WTC11 (cell line): ENCODE measurements at regions of chr9 and their contacts with region 1.

Region 1: DNA sequence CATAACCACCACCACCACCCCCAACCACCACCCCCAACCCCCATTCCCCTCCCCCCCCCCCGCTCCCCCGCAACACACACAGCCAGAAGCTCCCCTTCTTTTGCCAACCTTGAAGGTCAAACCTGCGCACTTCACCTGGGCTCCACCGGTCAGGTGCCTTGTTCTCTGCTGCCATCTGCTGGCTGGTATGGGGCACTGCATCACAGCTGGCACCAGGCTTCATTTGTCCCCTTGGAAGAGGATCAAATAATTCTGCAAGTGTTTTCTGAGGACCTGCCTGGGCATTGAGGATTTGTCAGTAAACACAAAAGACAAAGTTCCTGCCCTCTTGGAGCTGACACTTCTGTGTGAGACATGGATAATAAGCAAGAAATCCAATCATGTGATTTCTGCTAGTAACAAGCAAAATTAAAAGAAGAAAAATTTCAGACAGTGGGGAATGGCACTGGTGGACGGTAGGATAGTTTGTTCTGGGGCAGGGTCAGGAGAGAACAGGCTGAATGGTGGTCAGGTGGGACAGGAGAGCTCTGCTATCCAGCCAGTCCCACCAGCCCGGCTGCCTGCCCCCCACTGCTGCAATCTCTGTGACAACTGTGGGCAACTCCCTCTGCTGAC is 55.6 kb upstream of the LMX1B start:
- DNase-seq: peak; percentile 85
- ATAC-seq: peak; percentile 86
- H3K4me3 Mint-ChIP-seq: no peak overlapping the region
- H3K27ac Mint-ChIP-seq: no peak overlapping the region
- H3K4me1 Mint-ChIP-seq: peaks cover 7% of the 10 kb centered on the region
- H3K27me3 Mint-ChIP-seq: peaks cover 3% of the 10 kb centered on the region; the same call in 1 of the 2 replicates
- CTCF ChIP-seq: peak; percentile 98

Region 2: GRCh38 chr9:126482361-126483044 is 75.7 kb before region 1 on chr9:
- CTCF ChIA-PET with region 1: interaction called, 27 read pairs
- POLR2A ChIA-PET with region 1: no interaction called
- DNase-seq: peak; percentile 64
- ATAC-seq: peak; percentile 79
- H3K4me3 Mint-ChIP-seq: peak overlapping the region; percentile 60
- H3K27ac Mint-ChIP-seq: no peak overlapping the region
- H3K4me1 Mint-ChIP-seq: no peaks in the 10 kb centered on the region; the same call in 1 of the 2 replicates
- H3K27me3 Mint-ChIP-seq: no peaks in the 10 kb centered on the region; the same call in 1 of the 2 replicates
- CTCF ChIP-seq: no peak

Region 3: DNA sequence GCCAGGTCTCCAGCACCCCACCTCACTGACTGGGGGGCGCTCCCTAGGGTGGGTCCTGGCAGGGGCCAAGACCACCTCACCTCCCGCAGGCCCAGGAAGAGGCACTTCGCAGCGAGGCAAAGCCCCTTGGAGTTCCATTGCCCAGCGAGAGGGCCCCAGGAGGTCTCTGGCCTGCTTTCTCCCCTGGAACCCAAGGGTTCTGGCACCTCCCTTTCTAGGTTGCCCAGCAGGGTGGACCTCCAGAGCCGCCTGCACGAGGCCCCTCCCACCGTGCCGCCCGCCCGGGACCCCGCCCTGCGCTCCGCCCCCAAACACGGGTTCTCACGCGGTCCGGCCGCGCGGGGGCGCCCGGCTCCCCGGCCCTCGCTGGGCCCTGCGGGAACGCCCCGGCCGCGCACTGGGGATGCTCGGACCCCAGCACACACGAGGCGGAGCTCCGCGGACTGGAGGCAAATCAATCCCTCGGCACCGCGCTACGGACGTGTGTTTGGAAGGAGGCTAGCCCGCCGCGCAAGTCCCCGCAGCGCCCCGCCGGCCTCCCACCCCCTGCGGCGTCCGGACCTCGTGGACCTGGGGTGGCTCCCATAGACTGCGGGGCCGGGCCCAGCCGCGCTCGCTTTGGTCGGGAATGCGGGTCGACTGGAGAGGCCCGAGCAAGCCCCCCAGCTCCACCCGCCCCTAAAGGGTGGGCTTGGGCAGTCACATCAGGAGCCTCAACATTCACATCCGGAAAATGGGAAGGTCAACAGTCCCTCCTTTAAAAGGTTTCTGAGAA is 43.9 kb before region 1 on chr9:
- CTCF ChIA-PET with region 1: interaction called, 296 read pairs
- POLR2A ChIA-PET with region 1: interaction called, 4 read pairs
- DNase-seq: peak; percentile 86
- ATAC-seq: peak; percentile 85
- H3K4me3 Mint-ChIP-seq: peak overlapping the region; percentile 48
- H3K27ac Mint-ChIP-seq: no peak overlapping the region
- H3K4me1 Mint-ChIP-seq: peaks cover 34% of the 10 kb centered on the region
- H3K27me3 Mint-ChIP-seq: peaks cover 20% of the 10 kb centered on the region
- CTCF ChIP-seq: peak; percentile 56

Region 4: DNA sequence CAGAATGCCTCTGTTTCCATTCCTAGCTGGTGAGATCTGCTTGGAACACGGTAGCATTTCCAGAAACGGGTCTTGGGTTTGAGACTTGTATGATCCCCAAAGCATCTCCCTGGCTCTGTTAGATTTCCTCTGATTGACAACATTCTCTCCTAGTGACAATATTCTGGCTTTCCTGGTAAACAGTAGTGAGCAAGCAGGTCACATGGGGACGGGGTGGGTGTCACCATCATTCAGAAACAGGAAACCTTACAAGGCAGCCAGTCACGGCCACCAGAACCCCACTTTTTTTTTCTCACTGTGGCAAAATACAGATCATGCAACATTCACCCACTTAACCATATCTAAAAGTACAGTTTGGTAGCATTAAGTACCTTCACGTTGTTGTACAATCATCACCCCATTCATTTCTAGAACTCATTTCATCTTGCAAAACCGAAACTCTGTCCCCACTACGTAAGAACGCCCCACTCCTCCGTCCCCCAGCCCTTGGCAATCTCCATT is 34.5 kb before region 1 on chr9:
- CTCF ChIA-PET with region 1: interaction called, 296 read pairs
- POLR2A ChIA-PET with region 1: interaction called, 9 read pairs
- DNase-seq: no peak
- ATAC-seq: no peak
- H3K4me3 Mint-ChIP-seq: no peak overlapping the region
- H3K27ac Mint-ChIP-seq: no peak overlapping the region
- H3K4me1 Mint-ChIP-seq: peaks cover 31% of the 10 kb centered on the region
- H3K27me3 Mint-ChIP-seq: no peaks in the 10 kb centered on the region
- CTCF ChIP-seq: no peak

Region 5: GRCh38 chr9:126532019-126532462 is 26.1 kb before region 1 on chr9:
- CTCF ChIA-PET with region 1: interaction called, 23 read pairs
- POLR2A ChIA-PET with region 1: no interaction called
- DNase-seq: no peak
- ATAC-seq: no peak
- H3K4me3 Mint-ChIP-seq: no peak overlapping the region
- H3K27ac Mint-ChIP-seq: no peak overlapping the region
- H3K4me1 Mint-ChIP-seq: peaks cover 74% of the 10 kb centered on the region
- H3K27me3 Mint-ChIP-seq: peaks cover 9% of the 10 kb centered on the region
- CTCF ChIP-seq: no peak

Region 6: DNA sequence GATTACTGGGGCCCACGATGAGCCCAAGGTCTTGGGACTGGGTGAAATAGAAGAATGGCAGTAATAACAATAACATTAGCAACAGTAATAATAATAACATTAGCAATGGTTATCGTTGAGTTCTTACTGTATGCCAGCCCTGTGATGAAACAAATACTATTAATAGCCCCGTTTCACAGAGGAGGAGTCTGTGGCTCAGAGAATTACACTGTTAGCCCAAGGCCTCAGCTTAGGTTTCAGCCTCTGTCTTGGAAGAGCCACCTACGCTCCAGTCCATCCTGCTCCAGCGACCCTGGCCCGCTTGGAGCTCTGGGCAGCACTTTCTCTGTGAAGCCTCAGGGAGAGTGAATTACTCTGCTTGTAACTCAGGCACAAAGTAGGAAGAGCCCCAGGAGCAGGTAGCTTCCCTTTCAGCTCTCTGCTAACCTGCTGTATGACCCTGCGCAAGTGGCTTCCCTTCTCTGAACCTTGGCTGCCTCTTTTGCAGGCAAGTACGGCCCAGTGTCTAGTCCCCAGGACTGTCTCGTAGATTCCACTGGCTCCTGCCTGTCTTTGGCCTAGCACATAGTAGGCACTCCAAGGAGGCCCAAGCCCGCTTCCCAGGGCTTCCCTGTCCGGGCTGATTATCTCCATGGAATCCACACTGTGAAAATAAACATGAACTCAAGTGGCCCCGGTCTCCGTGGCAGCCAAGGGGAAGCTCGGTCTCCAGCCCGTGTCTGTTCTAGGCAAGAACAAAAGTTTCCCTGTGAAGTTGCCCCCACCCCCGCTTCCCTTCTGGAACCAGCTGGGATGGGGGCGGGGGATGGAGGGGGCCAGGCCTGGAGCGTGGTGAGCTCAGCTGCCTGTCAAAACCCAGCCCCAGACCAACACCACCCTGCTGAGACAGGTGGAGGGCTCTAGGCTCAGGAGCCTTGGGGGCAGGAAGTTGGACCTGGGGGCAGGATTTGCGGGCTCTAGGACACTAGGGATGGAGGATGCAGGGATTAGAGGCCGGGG is 29.3 kb after region 1 on chr9:
- CTCF ChIA-PET with region 1: interaction called, 12 read pairs
- POLR2A ChIA-PET with region 1: no interaction called
- DNase-seq: peak; percentile 32
- ATAC-seq: peak; percentile 50
- H3K4me3 Mint-ChIP-seq: no peak overlapping the region
- H3K27ac Mint-ChIP-seq: no peak overlapping the region
- H3K4me1 Mint-ChIP-seq: peaks cover 19% of the 10 kb centered on the region
- H3K27me3 Mint-ChIP-seq: no peaks in the 10 kb centered on the region
- CTCF ChIP-seq: no peak

Region 7: GRCh38 chr9:126638571-126639132 is 80.5 kb after region 1 on chr9:
- CTCF ChIA-PET with region 1: no interaction called
- POLR2A ChIA-PET with region 1: no interaction called
- DNase-seq: peak; percentile 59
- ATAC-seq: peak; percentile 82
- H3K4me3 Mint-ChIP-seq: peak overlapping the region; percentile 66
- H3K27ac Mint-ChIP-seq: no peak overlapping the region
- H3K4me1 Mint-ChIP-seq: peaks cover 34% of the 10 kb centered on the region
- H3K27me3 Mint-ChIP-seq: peaks cover 93% of the 10 kb centered on the region
- CTCF ChIP-seq: no peak

Region 8: GRCh38 chr9:126673689-126674364 is 115.7 kb after region 1 on chr9:
- CTCF ChIA-PET with region 1: interaction called, 16 read pairs
- POLR2A ChIA-PET with region 1: no interaction called
- DNase-seq: peak; percentile 50
- ATAC-seq: no peak
- H3K4me3 Mint-ChIP-seq: peak overlapping the region; percentile 24; the same call in 1 of the 2 replicates
- H3K27ac Mint-ChIP-seq: no peak overlapping the region
- H3K4me1 Mint-ChIP-seq: peaks cover 49% of the 10 kb centered on the region
- H3K27me3 Mint-ChIP-seq: peaks cover 70% of the 10 kb centered on the region
- CTCF ChIP-seq: no peak